Naive thymus-derived CD4-positive, alpha-beta T cell (primary cell): ENCODE measurements at regions of chr5 and their contacts with region 1.

Region 1: GRCh38 chr5:135466178-135467050 is 14.3 kb upstream of the TIFAB start:
- DNase-seq: peak; percentile 36 to 80 (median 58)
- ATAC-seq: peak; percentile 82
- H3K4me3 ChIP-seq: peak overlapping the region; percentile 39
- H3K4me3 Mint-ChIP-seq: peak overlapping the region; percentile 5 to 83 (median 68)
- H3K27ac ChIP-seq: no peak overlapping the region
- H3K27ac Mint-ChIP-seq: peak overlapping the region in 2 of 9 donors; percentile 59 to 68
- H3K4me1 ChIP-seq: peaks cover 0 to 5% of the 10 kb centered on the region in 2 donors
- H3K4me1 Mint-ChIP-seq: peaks cover 6 to 15% (median 10%) of the 10 kb centered on the region in 7 donors
- H3K27me3 ChIP-seq: no peaks in the 10 kb centered on the region
- H3K27me3 Mint-ChIP-seq: peaks cover 23 to 52% (median 37%) of the 10 kb centered on the region in 5 donors

Region 2: GRCh38 chr5:135551593-135552447 is 85.4 kb after region 1 on chr5:
- CTCF ChIA-PET with region 1: interaction called, 18 read pairs
- POLR2A ChIA-PET with region 1: no interaction called
- intact Hi-C with region 1: loop called (anchors 1 kb)
- DNase-seq: peak in 8 of 9 donors; percentile 7 to 53 (median 32)
- ATAC-seq: peak; percentile 75
- H3K4me3 ChIP-seq: no peak overlapping the region
- H3K4me3 Mint-ChIP-seq: no peak overlapping the region
- H3K27ac ChIP-seq: no peak overlapping the region
- H3K27ac Mint-ChIP-seq: no peak overlapping the region
- H3K4me1 ChIP-seq: no peaks in the 10 kb centered on the region
- H3K4me1 Mint-ChIP-seq: peaks cover 0 to 2% (median 0%) of the 10 kb centered on the region in 7 donors
- H3K27me3 ChIP-seq: peaks cover 0 to 4% of the 10 kb centered on the region in 2 donors
- H3K27me3 Mint-ChIP-seq: peaks cover 55 to 69% (median 62%) of the 10 kb centered on the region in 5 donors

Region 3: DNA sequence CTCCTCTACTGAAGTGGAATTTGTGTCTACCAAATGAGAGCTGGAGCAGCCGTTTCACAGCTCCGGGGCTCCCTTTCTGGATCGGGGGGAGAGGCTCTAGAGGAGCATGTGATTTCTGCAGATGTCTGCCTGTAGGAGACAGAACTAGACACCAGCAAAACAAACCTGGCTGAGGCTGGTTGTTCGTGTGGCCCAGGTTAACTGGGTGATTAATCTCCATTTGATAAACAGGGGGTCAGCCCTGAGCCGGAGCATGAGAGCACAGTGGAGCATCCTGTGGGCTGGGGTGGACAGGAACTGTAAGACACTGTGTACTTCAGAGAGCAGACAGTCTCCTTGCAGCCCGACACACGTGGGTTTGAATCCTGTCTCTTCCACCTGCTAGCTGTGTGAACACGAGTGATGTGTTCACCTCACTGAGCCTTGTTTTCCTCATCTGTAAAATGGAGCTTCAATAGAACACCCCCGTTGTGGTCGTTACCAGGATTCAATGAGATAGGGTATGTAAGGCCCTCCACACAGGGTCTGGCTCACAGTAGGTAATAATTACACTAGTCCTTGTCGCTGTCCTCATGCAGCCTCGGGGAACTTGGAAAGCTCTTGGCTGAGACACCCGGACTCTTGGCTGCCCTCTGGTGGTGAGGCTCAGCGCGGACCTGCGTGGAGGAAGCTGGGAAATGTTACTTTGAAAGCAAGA is 99.5 kb after region 1 on chr5:
- CTCF ChIA-PET with region 1: interaction called, 16 read pairs
- POLR2A ChIA-PET with region 1: no interaction called
- intact Hi-C with region 1: loop called (anchors 1 kb)
- DNase-seq: peak in 8 of 9 donors; percentile 33 to 75 (median 50)
- ATAC-seq: peak; percentile 75
- H3K4me3 ChIP-seq: no peak overlapping the region
- H3K4me3 Mint-ChIP-seq: no peak overlapping the region
- H3K27ac ChIP-seq: no peak overlapping the region
- H3K27ac Mint-ChIP-seq: no peak overlapping the region
- H3K4me1 ChIP-seq: no peaks in the 10 kb centered on the region
- H3K4me1 Mint-ChIP-seq: peaks cover 0 to 4% (median 2%) of the 10 kb centered on the region in 7 donors
- H3K27me3 ChIP-seq: no peaks in the 10 kb centered on the region
- H3K27me3 Mint-ChIP-seq: peaks cover under 1 to 10% (median 4%) of the 10 kb centered on the region in 5 donors

Region 4: DNA sequence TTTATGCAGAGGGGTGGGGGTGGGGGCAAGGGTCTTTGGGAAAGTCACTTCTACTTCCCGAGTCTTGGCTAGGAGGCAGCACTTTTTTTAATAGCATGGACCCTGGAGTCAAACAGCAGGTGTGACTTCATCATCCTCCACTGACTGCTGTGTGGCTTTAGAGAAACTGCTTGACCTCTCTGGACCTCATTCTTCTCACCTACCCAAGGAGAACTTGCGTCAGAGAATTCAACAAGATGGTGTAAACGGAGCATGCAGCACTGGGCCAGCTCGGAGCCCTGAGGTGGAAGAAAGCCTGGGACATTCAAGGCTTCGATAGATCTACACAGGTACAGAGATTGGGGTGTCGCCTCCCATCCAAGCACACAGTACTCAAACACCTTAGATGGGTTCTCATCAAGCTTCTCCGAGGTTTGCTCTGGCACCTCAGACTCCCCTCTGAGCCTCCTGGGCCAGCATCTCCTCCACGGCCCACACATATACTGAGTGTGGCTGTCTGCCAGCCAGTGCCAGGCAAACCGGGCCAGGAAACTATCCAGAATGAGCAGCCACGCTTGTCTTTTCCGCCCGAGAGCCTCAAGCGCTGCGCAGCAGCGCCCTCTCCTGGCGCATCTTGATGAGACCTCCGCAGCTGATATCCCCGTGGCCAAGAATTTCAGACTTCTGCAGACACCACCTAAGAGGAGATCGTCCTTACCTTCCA is 363.4 kb after region 1 on chr5:
- CTCF ChIA-PET with region 1: no interaction called
- POLR2A ChIA-PET with region 1: no interaction called
- intact Hi-C with region 1: loop called in 1 of 2 experiments (anchors 5 kb)
- DNase-seq: peak in 1 of 9 donors; percentile 50
- ATAC-seq: no peak
- H3K4me3 ChIP-seq: no peak overlapping the region
- H3K4me3 Mint-ChIP-seq: no peak overlapping the region
- H3K27ac ChIP-seq: no peak overlapping the region
- H3K27ac Mint-ChIP-seq: no peak overlapping the region
- H3K4me1 ChIP-seq: no peaks in the 10 kb centered on the region
- H3K4me1 Mint-ChIP-seq: peaks cover 0 to 7% (median 5%) of the 10 kb centered on the region in 7 donors
- H3K27me3 ChIP-seq: no peaks in the 10 kb centered on the region
- H3K27me3 Mint-ChIP-seq: peaks cover 32 to 48% (median 37%) of the 10 kb centered on the region in 5 donors

Region 5: DNA sequence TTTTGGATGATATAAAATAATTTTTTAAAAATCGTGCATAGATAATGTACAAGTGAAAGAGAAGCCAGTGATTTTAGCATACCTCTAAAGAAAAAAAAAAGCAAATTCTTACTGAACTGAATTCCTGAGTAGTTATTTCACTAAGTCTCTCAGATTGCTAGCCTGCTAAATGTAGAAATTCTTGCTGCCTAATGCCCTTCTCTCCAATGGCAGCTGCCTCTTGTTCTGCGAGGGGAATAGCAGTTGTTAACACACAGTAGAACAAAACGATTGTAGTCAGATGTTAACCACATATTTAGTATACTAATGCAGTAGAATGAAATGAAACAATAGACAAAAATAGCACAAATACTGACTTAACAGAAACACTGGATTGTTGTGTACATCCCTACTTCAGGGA is 693.0 kb after region 1 on chr5:
- CTCF ChIA-PET with region 1: no interaction called
- POLR2A ChIA-PET with region 1: no interaction called
- intact Hi-C with region 1: no loop called
- DNase-seq: no peak
- ATAC-seq: no peak
- H3K4me3 ChIP-seq: no peak overlapping the region
- H3K4me3 Mint-ChIP-seq: no peak overlapping the region
- H3K27ac ChIP-seq: no peak overlapping the region
- H3K27ac Mint-ChIP-seq: no peak overlapping the region
- H3K4me1 ChIP-seq: no peaks in the 10 kb centered on the region
- H3K4me1 Mint-ChIP-seq: peaks cover 0 to 4% (median 0%) of the 10 kb centered on the region in 7 donors
- H3K27me3 ChIP-seq: no peaks in the 10 kb centered on the region
- H3K27me3 Mint-ChIP-seq: peaks cover 0 to 8% (median 0%) of the 10 kb centered on the region in 5 donors